ENCODE measurements at regions of chr2 and their contacts with region 1.

Region 1: DNA sequence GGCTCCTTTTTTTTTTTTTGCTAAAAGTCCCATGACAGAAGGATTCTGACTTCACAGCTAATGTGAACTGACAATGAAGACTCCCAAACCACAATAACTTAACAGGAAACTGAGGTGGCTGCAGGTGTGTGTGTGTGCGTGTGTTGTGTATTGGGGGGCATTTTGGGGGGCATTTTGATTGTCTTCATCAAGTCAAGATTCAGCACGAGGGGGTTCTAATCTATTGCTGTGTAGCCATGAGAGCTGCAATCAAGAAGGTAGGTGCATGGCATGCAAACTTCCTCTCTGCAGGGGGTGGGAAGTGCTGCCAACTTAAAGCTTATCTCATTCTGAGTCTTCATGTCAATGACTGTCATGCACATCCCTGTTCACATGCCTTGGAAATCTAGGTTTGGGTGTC is 25.2 kb downstream of the SPRED2 start:
- DNase-seq: no peak
- ATAC-seq: no peak
- H3K4me3 ChIP-seq: no peak overlapping the region
- H3K27ac ChIP-seq: no peak overlapping the region
- H3K4me1 ChIP-seq: peaks cover 36% of the 10 kb centered on the region
- CTCF ChIP-seq: no peak
- EP300 ChIP-seq: no peak
- POLR2A ChIP-seq: no peak
- RAD21 ChIP-seq: no peak

Region 2: GRCh38 chr2:65420712-65421431 is 13.6 kb after region 1 on chr2:
- CTCF ChIA-PET with region 1: interaction called, 19 read pairs
- POLR2A ChIA-PET with region 1: no interaction called
- DNase-seq: peak; percentile 36 to 50
- ATAC-seq: peak in 1 of 2 experiments; percentile 65; a peak in 4 of 6 replicates
- H3K4me3 ChIP-seq: no peak overlapping the region
- H3K27ac ChIP-seq: peak overlapping the region; percentile 34 to 41; a peak in 4 of 6 replicates
- H3K4me1 ChIP-seq: peaks cover 45% of the 10 kb centered on the region
- CTCF ChIP-seq: no peak
- EP300 ChIP-seq: no peak
- POLR2A ChIP-seq: no peak
- RAD21 ChIP-seq: no peak